ENCODE measurements at regions of chr6 and their contacts with region 1.

Region 1: DNA sequence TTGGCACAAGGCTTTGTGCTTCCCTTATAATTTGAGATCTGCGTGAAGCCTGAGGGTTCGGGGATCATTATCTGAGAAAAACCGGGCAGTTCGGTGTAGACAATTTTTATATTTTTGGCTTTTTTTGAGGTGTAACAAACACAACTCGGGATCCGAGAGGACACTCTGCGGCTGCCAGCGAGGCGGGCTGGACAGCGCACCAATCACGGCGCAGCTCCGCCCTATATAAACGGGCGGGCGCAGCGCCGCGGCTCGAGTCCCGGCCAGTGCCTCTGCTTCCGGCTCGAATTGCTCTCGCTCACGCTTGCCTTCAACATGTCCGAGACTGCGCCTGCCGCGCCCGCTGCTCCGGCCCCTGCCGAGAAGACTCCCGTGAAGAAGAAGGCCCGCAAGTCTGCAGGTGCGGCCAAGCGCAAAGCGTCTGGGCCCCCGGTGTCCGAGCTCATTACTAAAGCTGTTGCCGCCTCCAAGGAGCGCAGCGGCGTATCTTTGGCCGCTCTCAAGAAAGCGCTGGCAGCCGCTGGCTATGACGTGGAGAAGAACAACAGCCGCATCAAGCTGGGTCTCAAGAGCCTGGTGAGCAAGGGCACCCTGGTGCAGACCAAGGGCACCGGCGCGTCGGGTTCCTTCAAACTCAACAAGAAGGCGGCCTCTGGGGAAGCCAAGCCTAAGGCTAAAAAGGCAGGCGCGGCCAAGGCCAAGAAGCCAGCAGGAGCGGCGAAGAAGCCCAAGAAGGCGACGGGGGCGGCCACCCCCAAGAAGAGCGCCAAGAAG is 69.0 kb downstream of the HFE start:
- H3K4me3 ChIP-seq: peak overlapping the region; percentile 71
- H3K27ac ChIP-seq: peak overlapping the region; percentile 48; the same call in 1 of the 2 replicates
- H3K4me1 ChIP-seq: no peaks in the 10 kb centered on the region
- CTCF ChIP-seq: peak; percentile 41; the same call in 1 of the 2 replicates

Region 2: DNA sequence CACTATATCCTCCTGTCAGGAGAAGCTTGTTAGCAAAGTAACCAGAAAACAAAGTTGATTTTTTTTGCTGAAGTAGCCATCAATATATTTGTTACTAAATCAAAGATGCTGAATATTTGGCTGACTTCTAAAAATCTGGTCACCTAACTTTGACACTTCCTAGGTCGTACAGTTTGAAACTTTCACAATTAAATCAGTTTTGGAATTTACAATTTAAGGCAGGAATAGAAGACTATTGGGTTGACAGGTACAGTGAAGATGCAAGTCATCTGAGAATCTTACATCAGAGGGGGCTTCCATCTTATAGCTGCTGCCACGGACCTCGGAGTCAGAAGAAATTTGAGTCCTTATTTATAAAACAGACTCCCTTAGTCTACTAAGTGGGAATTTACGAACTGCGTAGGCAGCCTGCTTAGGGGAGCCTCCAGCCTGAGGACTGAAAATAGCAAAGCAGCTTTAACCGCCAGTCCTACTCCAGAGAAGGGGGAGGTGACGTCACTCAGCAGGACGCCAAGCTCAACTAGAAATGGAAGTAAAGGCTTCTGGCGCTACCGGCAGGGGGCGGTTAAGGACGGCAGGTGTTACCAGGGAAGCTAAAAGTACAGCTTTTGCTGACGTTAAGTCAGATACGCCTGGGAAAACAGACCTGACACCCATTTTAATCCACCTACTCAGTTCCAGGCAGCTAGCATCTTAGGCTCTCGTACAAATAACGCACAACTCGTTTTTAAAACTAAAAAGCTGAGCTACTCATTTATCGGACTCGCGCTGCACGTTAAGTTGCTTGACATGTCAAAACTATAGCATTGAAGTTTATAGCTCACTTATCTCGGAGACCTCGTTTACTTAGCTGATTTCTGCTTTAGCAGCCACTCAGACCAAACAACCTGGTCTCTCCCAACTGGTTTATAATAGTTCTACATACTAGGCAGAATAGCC is 130.1 kb before region 1 on chr6:
- CTCF ChIA-PET with region 1: interaction called, 3 read pairs
- POLR2A ChIA-PET with region 1: interaction called, 71 read pairs
- H3K4me3 ChIP-seq: peak overlapping the region; percentile 48
- H3K27ac ChIP-seq: peak overlapping the region; percentile 47
- H3K4me1 ChIP-seq: peaks cover 18% of the 10 kb centered on the region
- CTCF ChIP-seq: peak; percentile 81

Region 3: GRCh38 chr6:26103770-26104456 is 52.4 kb before region 1 on chr6:
- CTCF ChIA-PET with region 1: no interaction called
- POLR2A ChIA-PET with region 1: interaction called, 43 read pairs
- H3K4me3 ChIP-seq: peak overlapping the region; percentile 49
- H3K27ac ChIP-seq: peak overlapping the region; percentile 4; the same call in 1 of the 2 replicates
- H3K4me1 ChIP-seq: peaks cover 6% of the 10 kb centered on the region; the same call in 1 of the 2 replicates
- CTCF ChIP-seq: peak; percentile 60

Region 4: DNA sequence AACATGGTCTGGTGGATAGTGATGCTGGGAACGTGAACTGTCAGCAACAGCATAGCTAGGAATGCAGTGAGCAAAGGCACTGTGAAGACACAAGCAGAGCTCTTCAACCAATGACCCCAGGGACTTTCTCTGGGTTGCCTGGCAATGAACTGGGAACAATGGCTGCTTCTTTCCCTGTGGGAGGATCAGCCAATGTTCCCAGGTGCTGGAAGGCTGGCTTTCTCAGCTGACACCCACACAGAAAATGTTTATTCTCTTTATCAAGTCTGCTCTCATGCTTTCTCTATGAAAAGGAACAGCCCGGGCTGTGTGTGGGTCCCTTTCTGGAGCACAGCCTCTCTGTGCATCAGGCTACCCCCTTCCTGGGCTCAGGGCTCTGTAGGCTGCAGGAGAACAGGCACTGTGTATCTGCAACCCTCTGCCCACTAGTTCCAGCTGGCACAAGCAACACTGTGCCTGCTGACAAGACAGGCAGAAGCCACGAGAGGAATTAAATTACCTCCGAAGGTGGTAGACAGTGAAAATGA is 14.8 kb before region 1 on chr6:
- CTCF ChIA-PET with region 1: no interaction called
- POLR2A ChIA-PET with region 1: interaction called, 11 read pairs
- H3K4me3 ChIP-seq: no peak overlapping the region
- H3K27ac ChIP-seq: no peak overlapping the region
- H3K4me1 ChIP-seq: no peaks in the 10 kb centered on the region
- CTCF ChIP-seq: no peak

Region 5: GRCh38 chr6:26199057-26199772 is 43.0 kb after region 1 on chr6:
- CTCF ChIA-PET with region 1: no interaction called
- POLR2A ChIA-PET with region 1: interaction called, 40 read pairs
- H3K4me3 ChIP-seq: peak overlapping the region; percentile 45
- H3K27ac ChIP-seq: no peak overlapping the region; the same call in 1 of the 2 replicates
- H3K4me1 ChIP-seq: no peaks in the 10 kb centered on the region
- CTCF ChIP-seq: no peak

Region 6: DNA sequence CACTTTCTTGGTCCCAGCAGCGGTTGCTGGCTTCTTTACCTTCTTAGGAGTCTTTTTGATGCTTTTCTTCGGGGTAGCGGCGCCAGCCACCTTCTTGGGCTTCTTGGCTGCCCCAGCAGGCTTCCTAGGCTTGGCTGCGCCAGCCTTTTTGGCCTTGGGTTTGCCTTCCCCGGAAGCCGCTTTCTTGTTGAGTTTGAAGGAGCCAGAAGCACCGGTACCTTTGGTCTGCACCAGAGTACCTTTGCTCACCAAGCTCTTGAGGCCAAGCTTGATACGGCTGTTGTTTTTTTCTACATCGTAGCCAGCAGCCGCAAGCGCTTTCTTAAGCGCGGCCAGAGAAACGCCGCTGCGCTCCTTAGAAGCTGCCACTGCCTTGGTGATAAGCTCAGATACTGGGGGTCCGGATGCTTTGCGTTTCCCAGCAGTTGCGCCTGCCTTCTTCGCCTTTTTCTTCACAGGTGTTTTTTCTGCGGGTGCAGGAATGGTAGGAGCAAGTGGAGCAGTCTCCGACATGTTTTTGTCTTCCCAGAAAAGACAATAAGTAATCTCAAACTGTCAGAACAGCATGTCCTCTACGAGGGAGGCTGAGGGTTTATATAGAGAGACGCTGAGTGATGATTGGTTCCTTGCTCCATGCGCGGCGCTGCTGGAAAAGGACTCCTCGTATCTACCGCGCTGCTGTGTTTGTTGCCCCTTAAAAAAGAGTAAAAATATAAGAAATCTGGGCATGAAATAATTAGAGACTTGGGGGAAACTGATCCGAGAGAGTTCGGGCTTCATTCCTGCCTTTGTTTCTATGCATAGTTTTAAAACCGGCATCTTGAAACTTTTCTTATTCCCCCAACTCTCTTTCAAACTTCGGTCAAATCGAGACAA is 78.4 kb after region 1 on chr6:
- CTCF ChIA-PET with region 1: no interaction called
- POLR2A ChIA-PET with region 1: interaction called, 14 read pairs
- H3K4me3 ChIP-seq: peak overlapping the region; percentile 45
- H3K27ac ChIP-seq: peak overlapping the region; percentile 8; the same call in 1 of the 2 replicates
- H3K4me1 ChIP-seq: no peaks in the 10 kb centered on the region
- CTCF ChIP-seq: no peak

Region 7: GRCh38 chr6:26290941-26291340 is 134.7 kb after region 1 on chr6:
- CTCF ChIA-PET with region 1: no interaction called
- POLR2A ChIA-PET with region 1: no interaction called
- H3K4me3 ChIP-seq: no peak overlapping the region
- H3K27ac ChIP-seq: no peak overlapping the region
- H3K4me1 ChIP-seq: no peaks in the 10 kb centered on the region
- CTCF ChIP-seq: no peak

Region 8: GRCh38 chr6:26304797-26305640 is 148.8 kb after region 1 on chr6:
- CTCF ChIA-PET with region 1: no interaction called
- POLR2A ChIA-PET with region 1: no interaction called
- H3K4me3 ChIP-seq: no peak overlapping the region
- H3K27ac ChIP-seq: no peak overlapping the region
- H3K4me1 ChIP-seq: no peaks in the 10 kb centered on the region
- CTCF ChIP-seq: no peak